ENCODE measurements at regions of chr1 and their contacts with region 1.

Region 1: DNA sequence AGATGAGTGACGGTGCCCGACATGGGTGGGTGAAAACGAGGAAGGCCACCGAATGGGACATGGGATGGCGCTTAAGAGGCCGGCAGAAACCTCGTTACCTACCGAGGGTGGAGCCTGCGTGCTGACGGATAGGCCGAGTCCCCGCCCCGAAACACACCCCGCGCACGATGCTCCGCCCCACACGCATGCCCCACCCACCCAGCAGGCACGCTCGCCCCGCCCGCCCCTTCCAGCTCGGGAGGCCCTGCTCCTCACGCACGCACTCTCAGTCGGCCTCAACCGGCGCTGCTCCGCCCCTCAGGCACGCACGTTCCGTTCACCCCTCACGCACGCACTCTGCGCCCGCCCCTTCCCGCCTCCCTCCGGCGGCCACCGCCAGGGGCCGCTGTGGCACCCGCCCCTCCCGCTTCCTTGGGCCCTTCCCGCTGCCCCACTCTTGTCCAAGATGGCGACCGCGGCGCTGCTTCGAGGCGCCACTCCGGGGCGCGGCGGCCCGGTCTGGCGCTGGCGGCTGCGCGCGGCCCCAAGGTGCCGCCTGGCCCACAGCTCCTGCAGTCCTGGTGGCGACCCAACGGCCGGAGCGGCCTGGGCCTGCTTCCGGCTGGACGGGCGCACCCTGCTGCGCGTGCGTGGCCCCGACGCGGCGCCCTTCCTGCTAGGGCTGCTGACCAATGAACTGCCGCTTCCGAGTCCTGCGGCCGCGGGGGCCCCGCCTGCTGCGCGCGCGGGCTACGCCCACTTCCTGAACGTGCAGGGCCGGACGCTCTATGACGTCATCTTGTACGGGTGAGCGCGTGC is at the start of gene IBA57:
- DNase-seq: peak; percentile 98 to 100 (median 98)
- ATAC-seq: peak; percentile 92
- H3K4me3 ChIP-seq: peak within 1 kb of the TSS; percentile 78
- H3K27ac ChIP-seq: peak within 1 kb of the TSS; percentile 99
- H3K4me1 ChIP-seq: peaks cover 18 to 48% of the 10 kb centered on the region in 2 experiments
- H3K27me3 ChIP-seq: no peaks in the 10 kb centered on the region
- CTCF ChIP-seq: peak; percentile 84 to 96 (median 93)
- EP300 ChIP-seq: peak; percentile 39; the same call in 1 of the 2 replicates
- POLR2A ChIP-seq: peak; percentile 75; the same call in 1 of the 2 replicates
- RAD21 ChIP-seq: peak; percentile 23 to 30; a peak in 2 of 4 replicates
- polyA plus RNA-seq, gene IBA57: 0.77 to 1.0 TPM

Region 2: DNA sequence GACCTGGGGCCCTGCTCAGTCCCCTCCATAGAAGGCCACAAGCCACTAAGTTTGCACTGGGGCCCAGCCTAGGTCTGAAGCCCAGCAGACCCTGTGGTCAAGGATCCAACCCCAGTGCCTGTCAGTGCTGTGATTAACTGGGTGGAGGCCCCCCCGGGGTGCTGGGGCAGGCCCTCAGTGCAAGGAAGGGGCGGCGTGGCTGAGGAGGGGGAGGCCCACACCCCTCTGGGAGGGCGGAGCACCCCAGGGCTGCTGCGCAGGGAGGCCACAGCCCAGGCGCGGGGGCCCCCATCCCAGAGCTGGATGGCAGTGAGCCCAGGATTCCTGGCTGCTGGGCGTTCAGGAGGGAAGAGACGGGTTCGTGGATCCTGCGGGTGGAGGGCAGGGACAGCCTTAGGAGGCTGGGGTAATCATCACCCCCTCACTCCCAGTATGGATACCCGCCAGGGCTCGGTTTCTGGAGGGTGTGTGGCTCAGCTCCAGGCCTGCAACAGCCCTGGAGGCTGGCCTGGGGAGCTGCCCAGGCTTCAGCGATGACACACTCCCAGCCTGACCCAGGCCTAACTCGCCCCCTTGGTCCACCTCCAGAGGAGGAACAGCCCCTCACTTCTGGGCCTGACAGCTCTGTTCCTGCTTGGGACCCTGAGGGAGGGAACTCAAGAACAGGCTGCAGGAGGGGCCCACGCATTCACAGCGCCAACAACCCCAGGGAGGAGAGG is 15.0 kb before region 1 on chr1:
- CTCF ChIA-PET with region 1: no interaction called
- POLR2A ChIA-PET with region 1: interaction called, 47 read pairs
- in situ Hi-C with region 1: no loop called
- intact Hi-C with region 1: loop called (anchors 1 kb)
- DNase-seq: peak in 3 of 4 experiments; percentile 32 to 58 (median 50)
- ATAC-seq: peak; percentile 2
- H3K4me3 ChIP-seq: no peak overlapping the region
- H3K27ac ChIP-seq: peak overlapping the region; percentile 62; the same call in 2 of the 3 replicates
- H3K4me1 ChIP-seq: peaks cover 27 to 82% of the 10 kb centered on the region in 2 experiments
- H3K27me3 ChIP-seq: no peaks in the 10 kb centered on the region
- CTCF ChIP-seq: no peak
- EP300 ChIP-seq: no peak
- POLR2A ChIP-seq: no peak
- RAD21 ChIP-seq: no peak

Region 3: DNA sequence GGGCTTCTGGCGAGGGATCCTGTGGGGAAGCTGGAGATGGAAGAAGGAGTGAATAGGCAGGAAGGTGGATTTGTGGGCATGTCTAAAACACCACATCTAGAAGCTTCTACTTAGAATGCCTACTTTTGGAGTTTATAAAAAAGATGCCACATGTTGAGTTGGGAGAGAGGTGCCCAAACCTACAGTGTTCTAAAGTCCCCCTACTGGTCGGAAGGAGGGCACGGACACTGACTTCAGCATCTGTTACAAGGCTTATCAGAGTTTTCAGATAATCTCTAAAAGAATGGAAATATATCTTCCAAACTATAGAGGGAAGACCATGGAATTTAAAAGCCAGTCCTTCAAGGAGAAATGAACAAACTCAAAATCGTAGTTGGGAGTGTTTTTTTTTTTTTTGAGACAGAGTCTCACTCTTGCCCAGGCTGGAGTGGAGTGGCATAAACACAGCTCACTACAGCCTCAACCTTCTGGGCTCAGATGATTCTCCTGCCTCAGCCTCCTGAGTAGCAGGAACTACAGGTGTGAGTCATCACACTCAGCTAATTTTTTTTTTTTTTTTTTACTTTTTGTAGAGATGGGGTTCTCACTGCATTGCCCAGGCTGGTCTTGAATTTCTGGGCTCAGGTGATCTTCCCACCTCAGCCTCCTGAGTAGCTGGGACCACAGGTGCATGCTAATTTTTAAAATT is 14.8 kb after region 1 on chr1:
- CTCF ChIA-PET with region 1: no interaction called
- POLR2A ChIA-PET with region 1: interaction called, 32 read pairs
- in situ Hi-C with region 1: no loop called
- intact Hi-C with region 1: no loop called
- DNase-seq: no peak
- ATAC-seq: no peak
- H3K4me3 ChIP-seq: no peak overlapping the region
- H3K27ac ChIP-seq: no peak overlapping the region
- H3K4me1 ChIP-seq: peaks cover 22 to 31% of the 10 kb centered on the region in 2 experiments; a peak in 4 of 5 replicates
- H3K27me3 ChIP-seq: no peaks in the 10 kb centered on the region
- CTCF ChIP-seq: peak; percentile 25 to 51 (median 36); a peak in 5 of 6 replicates
- EP300 ChIP-seq: no peak
- POLR2A ChIP-seq: no peak
- RAD21 ChIP-seq: no peak

Measured in K562 (cell line).